ENCODE measurements at regions of chr1 and their contacts with region 1.

Region 1: DNA sequence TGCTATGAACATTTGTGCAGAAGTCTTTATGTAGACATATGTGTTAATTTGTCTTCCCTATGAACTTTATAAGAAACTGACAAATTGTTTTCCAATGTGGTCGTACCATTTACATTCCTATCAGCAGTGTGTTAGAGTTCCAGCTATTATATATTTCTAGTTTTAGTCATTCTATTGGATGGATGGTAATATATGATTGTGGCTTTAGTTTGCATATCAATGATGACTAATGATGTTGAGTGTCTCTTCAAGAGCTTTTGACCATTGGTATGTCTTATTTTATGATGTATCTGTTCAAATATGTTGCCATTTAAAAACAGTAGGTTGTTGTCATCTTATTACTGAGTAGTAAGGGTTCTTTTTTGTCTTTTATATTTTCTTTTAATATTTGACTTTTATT is 16.2 kb upstream of the ZNF326 start:
- DNase-seq: peak; percentile 74
- ATAC-seq: peak; percentile 48
- H3K4me3 ChIP-seq: no peak overlapping the region
- H3K27ac ChIP-seq: no peak overlapping the region
- H3K4me1 ChIP-seq: peaks cover 12% of the 10 kb centered on the region
- H3K27me3 ChIP-seq: no peaks in the 10 kb centered on the region
- CTCF ChIP-seq: no peak
- POLR2A ChIP-seq: no peak
- RAD21 ChIP-seq: no peak

Region 2: GRCh38 chr1:89918127-89918793 is 60.5 kb before region 1 on chr1:
- CTCF ChIA-PET with region 1: no interaction called
- POLR2A ChIA-PET with region 1: no interaction called
- dilution Hi-C with region 1: no loop called
- in situ Hi-C with region 1: no loop called
- intact Hi-C with region 1: loop called (anchors 1 kb)
- DNase-seq: peak; percentile 70
- ATAC-seq: peak; percentile 28; the same call in 1 of the 2 replicates
- H3K4me3 ChIP-seq: no peak overlapping the region
- H3K27ac ChIP-seq: no peak overlapping the region
- H3K4me1 ChIP-seq: no peaks in the 10 kb centered on the region; the same call in 1 of the 2 replicates
- H3K27me3 ChIP-seq: no peaks in the 10 kb centered on the region
- CTCF ChIP-seq: no peak
- POLR2A ChIP-seq: no peak
- RAD21 ChIP-seq: no peak